ENCODE measurements at regions of chr4 and their contacts with region 1.

Region 1: GRCh38 chr4:1167247-1167949 is 5.0 kb downstream of the SPON2 start:
- DNase-seq: peak; percentile 91
- ATAC-seq: peak; percentile 96
- H3K4me3 ChIP-seq: peak overlapping the region; percentile 85
- H3K27ac ChIP-seq: peak overlapping the region; percentile 80
- H3K4me1 ChIP-seq: peaks cover 24% of the 10 kb centered on the region
- H3K27me3 ChIP-seq: peaks cover 0 to 9% of the 10 kb centered on the region in 2 experiments; a peak in 2 of 4 replicates
- CTCF ChIP-seq: peak; percentile 93 to 95 (median 94); a peak in 5 of 6 replicates
- EP300 ChIP-seq: no peak
- POLR2A ChIP-seq: peak; percentile 86
- RAD21 ChIP-seq: peak; percentile 76

Region 2: DNA sequence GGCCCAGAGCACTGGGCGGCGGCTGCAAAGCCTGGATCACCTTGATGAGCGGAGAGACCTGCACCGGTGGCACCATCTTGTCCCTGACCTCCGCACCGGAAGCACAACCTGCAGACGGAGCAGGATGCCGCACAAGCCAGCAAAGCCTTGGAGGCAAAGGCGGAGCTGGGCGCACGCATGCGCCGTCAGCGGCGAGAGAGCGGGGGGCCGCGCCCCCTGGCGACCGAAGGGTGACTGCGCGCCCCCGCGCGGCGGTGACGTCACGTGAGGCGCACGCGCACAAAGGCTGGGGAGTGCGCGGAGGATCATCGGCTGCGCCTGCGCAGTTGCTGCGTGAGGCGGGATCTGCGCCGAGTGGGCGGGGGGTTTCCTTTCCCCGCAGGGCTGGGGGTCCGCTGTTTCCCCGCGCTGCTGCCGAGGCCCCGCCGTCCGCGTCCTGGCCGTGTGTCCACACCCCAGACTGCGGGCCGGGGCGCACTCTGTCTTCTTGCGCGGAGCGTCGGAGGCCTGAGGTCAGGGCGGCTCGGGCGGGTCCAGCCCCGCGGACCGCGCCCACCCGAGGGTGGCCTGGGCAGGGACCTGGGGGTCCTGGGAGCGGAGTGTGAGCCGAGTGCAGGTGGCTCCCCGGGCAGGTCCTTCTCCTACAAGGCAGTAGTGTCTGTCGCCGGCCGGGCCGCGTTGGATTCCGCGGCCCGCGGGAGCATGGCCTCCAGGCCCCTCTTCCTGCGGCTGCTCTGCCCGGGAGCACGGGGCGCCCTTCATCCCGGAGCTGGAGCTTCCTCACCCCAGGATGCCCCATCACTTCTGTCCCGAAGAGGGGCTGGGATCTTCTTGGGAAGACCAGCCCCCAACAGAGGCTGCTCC is 493.0 kb before region 1 on chr4 and contains the starts of genes ATP5ME and MYL5:
- CTCF ChIA-PET with region 1: no interaction called
- POLR2A ChIA-PET with region 1: no interaction called
- RAD21 ChIA-PET with region 1: no interaction called
- SMC1A ChIA-PET with region 1: no interaction called
- in situ Hi-C with region 1: no loop called
- intact Hi-C with region 1: no loop called
- DNase-seq: peak; percentile 93
- ATAC-seq: peak; percentile 89
- H3K4me3 ChIP-seq: peak within 1 kb of the TSS; percentile 89
- H3K27ac ChIP-seq: peak within 1 kb of the TSS; percentile 92
- H3K4me1 ChIP-seq: peaks cover 27% of the 10 kb centered on the region
- H3K27me3 ChIP-seq: no peaks in the 10 kb centered on the region
- CTCF ChIP-seq: peak; percentile 88 to 99 (median 99); a peak in 4 of 6 replicates
- EP300 ChIP-seq: no peak
- POLR2A ChIP-seq: no peak
- RAD21 ChIP-seq: peak; percentile 48; the same call in 1 of the 2 replicates
- polyA plus RNA-seq, gene ATP5ME: 1,956 to 2,374 TPM
- polyA plus RNA-seq, gene MYL5: 1.2 to 3.9 TPM

Region 3: GRCh38 chr4:1130316-1131186 is 36.8 kb before region 1 on chr4:
- CTCF ChIA-PET with region 1: interaction called, 11 read pairs
- POLR2A ChIA-PET with region 1: interaction called, 3 read pairs
- RAD21 ChIA-PET with region 1: interaction called, 7 read pairs
- SMC1A ChIA-PET with region 1: interaction called, 7 read pairs
- in situ Hi-C with region 1: no loop called
- intact Hi-C with region 1: no loop called
- DNase-seq: peak; percentile 57
- ATAC-seq: peak; percentile 100
- H3K4me3 ChIP-seq: no peak overlapping the region
- H3K27ac ChIP-seq: no peak overlapping the region
- H3K4me1 ChIP-seq: no peaks in the 10 kb centered on the region; the same call in 1 of the 2 replicates
- H3K27me3 ChIP-seq: no peaks in the 10 kb centered on the region
- CTCF ChIP-seq: peak; percentile 99 to 100 (median 99); a peak in 5 of 6 replicates
- EP300 ChIP-seq: no peak
- POLR2A ChIP-seq: no peak
- RAD21 ChIP-seq: peak; percentile 100

Region 4: DNA sequence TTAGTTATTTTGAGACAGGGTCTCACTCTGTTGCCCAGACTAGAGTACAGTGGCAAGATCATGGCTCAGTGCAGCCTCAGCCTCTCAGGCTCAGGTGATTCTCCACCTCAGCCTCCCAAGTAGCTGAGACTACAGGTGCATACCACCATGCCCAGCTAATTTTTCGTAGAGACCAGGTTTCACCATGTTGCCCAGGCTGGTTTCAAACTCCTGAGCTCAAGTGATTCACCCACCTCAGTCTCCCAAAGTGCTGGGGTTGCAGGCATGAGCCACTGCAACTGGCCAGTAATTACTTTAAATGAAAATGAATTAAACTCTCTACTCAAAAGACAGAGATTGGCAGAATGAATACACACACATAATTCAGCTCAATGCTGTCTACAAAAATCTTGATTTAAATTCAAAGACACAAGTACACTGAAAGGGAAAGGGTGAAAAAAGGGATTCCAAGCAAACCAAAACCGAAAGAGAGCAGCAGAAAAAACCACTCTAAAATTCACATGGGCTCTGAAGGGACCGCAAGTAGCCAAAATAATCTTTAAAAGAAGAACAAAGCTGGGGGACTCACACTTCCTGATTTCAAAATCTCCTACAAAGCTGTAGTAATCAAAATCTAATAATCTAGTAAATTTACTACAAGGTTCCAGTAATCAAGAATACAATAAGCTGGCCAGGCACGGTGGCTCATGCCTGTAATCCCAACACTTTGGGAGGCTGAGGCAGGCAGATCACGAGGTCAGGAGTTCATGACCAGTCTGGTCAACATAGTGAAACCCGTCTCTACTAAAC is 16.8 kb after region 1 on chr4:
- CTCF ChIA-PET with region 1: interaction called, 16 read pairs
- POLR2A ChIA-PET with region 1: interaction called, 5 read pairs
- RAD21 ChIA-PET with region 1: interaction called, 6 read pairs
- SMC1A ChIA-PET with region 1: interaction called, 13 read pairs
- in situ Hi-C with region 1: no loop called
- intact Hi-C with region 1: no loop called
- DNase-seq: peak; percentile 64
- ATAC-seq: peak; percentile 82
- H3K4me3 ChIP-seq: peak overlapping the region; percentile 60
- H3K27ac ChIP-seq: peak overlapping the region; percentile 57
- H3K4me1 ChIP-seq: peaks cover 27% of the 10 kb centered on the region
- H3K27me3 ChIP-seq: no peaks in the 10 kb centered on the region
- CTCF ChIP-seq: no peak
- EP300 ChIP-seq: 0 out of 4 replicates have a peak, but pooled peaks of 1 of the 2 experiments have one; percentile 39
- POLR2A ChIP-seq: no peak
- RAD21 ChIP-seq: no peak

Region 5: DNA sequence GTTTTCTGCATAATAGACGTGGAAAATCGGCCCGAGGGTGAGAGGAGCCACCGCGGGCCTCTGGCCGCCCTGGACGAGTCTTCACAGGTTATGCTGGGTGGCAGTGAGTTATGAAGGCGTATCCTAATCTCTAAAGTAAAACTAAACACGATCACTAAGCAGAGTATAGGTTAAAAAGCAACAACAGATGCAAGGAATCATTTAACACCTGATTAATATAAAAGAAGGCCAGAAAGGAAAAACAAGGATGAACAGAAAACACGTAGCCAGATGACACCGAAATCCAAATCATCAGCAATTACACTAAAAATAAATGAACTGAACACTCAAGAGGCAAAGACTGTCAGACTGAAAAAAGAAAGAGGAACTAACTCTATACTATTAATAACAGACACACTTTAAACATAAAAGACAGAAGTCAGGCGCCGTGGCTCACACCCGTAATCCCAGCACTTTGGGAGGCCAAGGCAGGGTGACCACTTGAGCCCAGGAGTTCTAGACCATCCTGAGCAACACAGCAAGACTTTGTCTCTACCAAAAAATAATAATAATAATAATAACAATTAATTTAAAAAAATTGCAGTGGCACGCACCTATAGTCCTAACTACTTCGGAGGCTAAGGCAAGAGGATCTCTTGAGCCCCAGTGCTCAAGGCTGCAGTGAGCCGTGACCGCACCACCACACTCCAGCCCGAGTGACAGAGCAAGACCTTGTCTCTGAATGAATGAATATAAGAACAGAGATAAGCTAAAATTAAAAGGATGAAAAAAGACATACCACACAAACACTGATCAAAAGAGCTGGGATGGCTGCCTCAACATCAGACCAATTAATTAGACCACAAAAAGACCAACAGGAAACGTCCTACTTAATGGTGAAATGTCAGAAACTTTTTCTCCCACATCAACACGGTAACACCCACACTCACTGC is 51.5 kb after region 1 on chr4:
- CTCF ChIA-PET with region 1: interaction called, 4 read pairs
- POLR2A ChIA-PET with region 1: interaction called, 6 read pairs
- RAD21 ChIA-PET with region 1: interaction called, 9 read pairs
- SMC1A ChIA-PET with region 1: interaction called, 10 read pairs
- in situ Hi-C with region 1: no loop called
- intact Hi-C with region 1: loop called (anchors 1 kb)
- DNase-seq: peak; percentile 92
- ATAC-seq: peak; percentile 91
- H3K4me3 ChIP-seq: peak overlapping the region; percentile 45; the same call in 1 of the 2 replicates
- H3K27ac ChIP-seq: peak overlapping the region; percentile 88
- H3K4me1 ChIP-seq: peaks cover 51% of the 10 kb centered on the region
- H3K27me3 ChIP-seq: no peaks in the 10 kb centered on the region
- CTCF ChIP-seq: no peak
- EP300 ChIP-seq: peak; percentile 87 to 88; a peak in 3 of 4 replicates
- POLR2A ChIP-seq: no peak
- RAD21 ChIP-seq: no peak

Region 6: DNA sequence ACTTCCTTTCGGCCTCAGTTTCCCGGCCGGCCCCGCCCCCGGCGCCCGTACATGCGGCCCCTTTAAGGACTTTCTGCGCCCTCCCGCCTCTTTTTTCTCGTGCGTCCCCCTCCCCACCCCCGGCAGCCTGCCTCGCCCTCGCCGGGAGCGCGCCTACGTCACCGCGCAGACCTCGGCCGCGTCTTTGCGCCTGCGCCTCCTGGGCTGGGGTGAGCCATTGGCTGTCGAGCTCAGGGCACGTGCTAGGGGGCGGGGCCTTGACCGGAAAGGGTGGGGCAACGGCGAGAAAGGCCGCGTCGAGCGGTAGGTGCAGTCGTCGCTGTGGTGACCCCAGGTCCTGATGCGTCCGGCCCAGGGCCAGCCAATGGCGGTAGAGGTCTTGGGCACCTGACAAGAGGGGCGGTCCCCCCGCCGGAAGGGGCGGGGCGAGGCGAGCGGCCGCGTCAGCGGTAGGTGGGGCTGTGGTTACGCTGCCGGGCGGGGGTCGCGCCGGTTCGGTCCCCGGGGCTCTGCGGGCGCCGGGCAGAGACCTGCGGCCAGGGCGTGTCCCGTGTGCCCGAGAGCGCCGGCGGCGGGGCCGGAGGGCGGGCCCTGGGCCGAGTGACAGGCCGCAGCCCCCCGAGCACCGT is 179.5 kb after region 1 on chr4 and contains the start of gene UVSSA:
- CTCF ChIA-PET with region 1: interaction called, 18 read pairs
- POLR2A ChIA-PET with region 1: interaction called, 3 read pairs
- RAD21 ChIA-PET with region 1: interaction called, 6 read pairs
- SMC1A ChIA-PET with region 1: interaction called, 5 read pairs
- in situ Hi-C with region 1: no loop called
- intact Hi-C with region 1: loop called (anchors 1 kb)
- DNase-seq: peak; percentile 97
- ATAC-seq: peak; percentile 94
- H3K4me3 ChIP-seq: peak within 1 kb of the TSS; percentile 81
- H3K27ac ChIP-seq: peak within 1 kb of the TSS; percentile 88
- H3K4me1 ChIP-seq: peaks cover 10% of the 10 kb centered on the region
- H3K27me3 ChIP-seq: no peaks in the 10 kb centered on the region
- CTCF ChIP-seq: no peak
- EP300 ChIP-seq: no peak
- POLR2A ChIP-seq: no peak; the same call in 1 of the 2 replicates
- RAD21 ChIP-seq: no peak
- polyA plus RNA-seq, gene UVSSA: 0.34 to 0.82 TPM